Activated CD4-positive, alpha-beta T cell treated with anti-CD3 and anti-CD28 coated beads, Interleukin-2, amount 10 ng/mL, durations not matched to agents 7 days and 5 days (primary cell): ENCODE measurements at regions of chr15 and their contacts with region 1.

Region 1: GRCh38 chr15:40367686-40368611 is 9.9 kb downstream of the DISP2 start:
- DNase-seq: peak; percentile 89
- H3K4me3 Mint-ChIP-seq: peak overlapping the region; percentile 72
- H3K27ac Mint-ChIP-seq: peak overlapping the region; percentile 84
- H3K4me1 Mint-ChIP-seq: peaks cover 13% of the 10 kb centered on the region
- H3K27me3 Mint-ChIP-seq: peaks cover 6% of the 10 kb centered on the region

Region 2: DNA sequence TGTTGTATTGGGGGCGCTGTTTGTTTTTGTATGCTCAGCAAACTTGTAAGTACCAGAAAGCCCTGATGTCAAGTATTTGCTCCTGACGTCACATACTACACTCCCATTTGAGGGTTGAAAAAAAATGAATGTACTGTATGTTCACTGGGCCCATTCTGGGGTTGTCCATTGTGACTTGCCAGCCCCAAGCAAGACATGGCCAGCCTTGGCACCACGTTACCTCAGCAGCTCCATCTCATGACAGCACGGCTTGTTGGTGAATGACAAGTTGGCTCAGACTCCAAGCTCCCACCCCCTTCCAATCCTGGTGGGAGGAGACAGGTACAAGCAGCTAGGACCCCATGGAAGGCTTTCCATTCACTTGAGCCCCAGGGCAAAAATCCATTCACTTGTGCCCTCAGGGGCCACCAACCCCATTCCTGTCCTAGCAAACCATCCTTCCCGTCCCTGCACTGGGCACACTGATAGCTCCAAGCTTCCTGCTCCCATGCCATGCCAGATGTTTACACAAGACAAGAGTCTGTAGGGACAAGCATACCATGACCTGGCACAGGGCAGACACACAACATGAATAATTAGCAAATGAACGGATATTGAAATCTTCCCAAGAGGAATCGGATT is 15.6 kb before region 1 on chr15:
- CTCF ChIA-PET with region 1: interaction called, 42 read pairs
- POLR2A ChIA-PET with region 1: no interaction called
- DNase-seq: no peak
- H3K4me3 Mint-ChIP-seq: no peak overlapping the region
- H3K27ac Mint-ChIP-seq: no peak overlapping the region
- H3K4me1 Mint-ChIP-seq: no peaks in the 10 kb centered on the region
- H3K27me3 Mint-ChIP-seq: peaks cover 20% of the 10 kb centered on the region

Region 3: DNA sequence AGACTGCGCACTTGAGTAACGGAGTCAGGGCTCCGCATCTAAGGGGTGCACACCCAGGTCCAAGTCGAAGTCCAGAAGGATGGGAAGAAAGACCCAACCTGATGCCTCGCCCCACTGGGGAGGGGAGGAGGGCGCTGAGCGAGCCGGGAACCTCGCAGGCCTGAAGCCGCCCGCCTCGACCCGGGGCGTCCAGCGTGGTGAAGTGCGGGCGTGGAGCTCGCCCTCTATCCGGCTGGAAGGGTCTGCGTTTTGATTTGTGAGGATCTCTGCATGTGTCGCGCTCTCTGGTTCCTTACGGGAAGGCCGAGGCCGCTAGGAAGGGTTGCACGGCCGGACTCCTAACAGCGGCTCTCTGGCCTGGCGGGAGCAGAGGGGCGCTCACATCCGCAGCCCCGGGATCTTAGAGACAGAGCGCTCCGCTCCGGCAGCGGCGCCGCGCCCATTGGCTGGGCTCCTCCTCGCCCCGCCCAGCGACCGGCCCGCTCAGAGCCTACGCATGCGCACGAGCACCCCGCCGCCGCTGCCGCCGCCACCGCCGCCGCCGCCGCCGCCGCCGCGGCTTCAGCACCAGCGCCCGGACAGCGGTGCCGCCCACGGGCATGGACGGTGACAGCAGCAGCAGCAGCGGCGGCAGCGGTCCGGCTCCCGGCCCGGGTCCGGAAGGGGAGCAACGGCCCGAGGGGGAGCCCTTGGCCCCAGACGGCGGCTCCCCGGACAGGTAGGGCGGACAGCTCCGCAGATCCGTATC is 10.1 kb before region 1 on chr15 and contains the start of gene DISP2:
- CTCF ChIA-PET with region 1: interaction called, 42 read pairs
- POLR2A ChIA-PET with region 1: no interaction called
- DNase-seq: peak; percentile 88
- H3K4me3 Mint-ChIP-seq: peak within 1 kb of the TSS; percentile 75
- H3K27ac Mint-ChIP-seq: no peak within 1 kb of the TSS
- H3K4me1 Mint-ChIP-seq: peaks cover 11% of the 10 kb centered on the region
- H3K27me3 Mint-ChIP-seq: peaks cover 20% of the 10 kb centered on the region
- total RNA-seq, gene DISP2: 0.60 to 1.4 TPM

Region 4: GRCh38 chr15:40382580-40383456 is 14.9 kb after region 1 on chr15 and contains the start of gene KNSTRN:
- CTCF ChIA-PET with region 1: interaction called, 18 read pairs
- POLR2A ChIA-PET with region 1: no interaction called
- DNase-seq: peak; percentile 96
- H3K4me3 Mint-ChIP-seq: peak within 1 kb of the TSS; percentile 100
- H3K27ac Mint-ChIP-seq: peak within 1 kb of the TSS; percentile 95
- H3K4me1 Mint-ChIP-seq: peaks cover 36% of the 10 kb centered on the region
- H3K27me3 Mint-ChIP-seq: peaks cover 4% of the 10 kb centered on the region
- total RNA-seq, gene KNSTRN: 57.5 to 63.3 TPM

Region 5: GRCh38 chr15:40388946-40389841 is 21.2 kb after region 1 on chr15:
- CTCF ChIA-PET with region 1: interaction called, 17 read pairs
- POLR2A ChIA-PET with region 1: no interaction called
- DNase-seq: no peak
- H3K4me3 Mint-ChIP-seq: no peak overlapping the region
- H3K27ac Mint-ChIP-seq: no peak overlapping the region
- H3K4me1 Mint-ChIP-seq: peaks cover 16% of the 10 kb centered on the region
- H3K27me3 Mint-ChIP-seq: no peaks in the 10 kb centered on the region

Region 6: GRCh38 chr15:40405501-40406381 is 37.8 kb after region 1 on chr15 and contains the start of gene IVD:
- CTCF ChIA-PET with region 1: interaction called, 21 read pairs
- POLR2A ChIA-PET with region 1: no interaction called
- DNase-seq: peak; percentile 87
- H3K4me3 Mint-ChIP-seq: peak within 1 kb of the TSS; percentile 83
- H3K27ac Mint-ChIP-seq: peak within 1 kb of the TSS; percentile 91
- H3K4me1 Mint-ChIP-seq: peaks cover 55% of the 10 kb centered on the region
- H3K27me3 Mint-ChIP-seq: no peaks in the 10 kb centered on the region
- total RNA-seq, gene IVD: 38.4 to 47.1 TPM

Region 7: GRCh38 chr15:40421246-40422157 is 53.6 kb after region 1 on chr15:
- CTCF ChIA-PET with region 1: interaction called, 16 read pairs
- POLR2A ChIA-PET with region 1: no interaction called
- DNase-seq: peak; percentile 81
- H3K4me3 Mint-ChIP-seq: no peak overlapping the region
- H3K27ac Mint-ChIP-seq: no peak overlapping the region
- H3K4me1 Mint-ChIP-seq: peaks cover 2% of the 10 kb centered on the region
- H3K27me3 Mint-ChIP-seq: no peaks in the 10 kb centered on the region